ENCODE measurements at regions of chr1 and their contacts with region 1.

Region 1: DNA sequence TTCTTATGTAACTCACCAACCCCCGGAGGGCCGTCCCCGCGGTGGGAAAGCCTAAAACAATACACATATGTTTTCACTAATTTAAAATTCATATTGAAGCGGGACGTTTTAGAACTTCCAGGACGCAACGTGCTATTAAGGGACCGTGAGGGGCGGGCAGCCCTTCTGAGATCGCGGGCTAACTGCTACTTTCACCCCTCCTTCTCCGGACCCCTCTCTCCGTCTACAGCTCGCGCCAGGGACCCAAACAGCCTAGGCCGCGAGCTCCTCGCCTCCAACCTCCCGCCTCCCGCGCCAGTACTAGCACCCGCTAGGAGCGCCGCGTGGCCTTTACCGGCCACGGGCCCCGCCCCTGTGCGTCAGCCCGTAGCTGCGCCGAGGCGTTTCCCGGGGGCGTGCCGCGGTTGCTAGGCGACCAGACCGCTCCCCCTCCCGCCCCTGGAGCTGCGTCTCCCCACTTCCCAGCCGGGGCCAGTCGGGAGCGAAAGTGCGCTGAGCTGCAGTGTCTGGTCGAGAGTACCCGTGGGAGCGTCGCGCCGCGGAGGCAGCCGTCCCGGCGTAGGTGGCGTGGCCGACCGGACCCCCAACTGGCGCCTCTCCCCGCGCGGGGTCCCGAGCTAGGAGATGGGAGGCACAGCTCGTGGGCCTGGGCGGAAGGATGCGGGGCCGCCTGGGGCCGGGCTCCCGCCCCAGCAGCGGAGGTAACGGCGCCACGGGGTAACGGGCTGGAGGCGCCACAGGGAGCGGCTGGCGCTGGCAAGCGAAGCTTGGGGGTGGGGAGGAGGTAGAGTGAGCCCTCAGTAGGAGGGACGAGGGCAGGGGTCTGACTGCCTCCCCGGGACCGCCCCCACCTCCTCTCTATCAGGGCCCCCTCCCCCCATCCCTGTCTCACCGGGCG is at the start of gene DYRK3:
- DNase-seq: peak; percentile 86
- ATAC-seq: peak; percentile 91
- H3K4me3 Mint-ChIP-seq: peak within 1 kb of the TSS; percentile 89
- H3K27ac Mint-ChIP-seq: peak within 1 kb of the TSS; percentile 76
- H3K4me1 Mint-ChIP-seq: peaks cover 24% of the 10 kb centered on the region
- H3K27me3 Mint-ChIP-seq: peaks cover 2% of the 10 kb centered on the region
- CTCF ChIP-seq: no peak
- total RNA-seq, gene DYRK3: 0.33 and 0.37 TPM in 2 replicates

Region 2: GRCh38 chr1:206075786-206076755 is 559.3 kb before region 1 on chr1:
- CTCF ChIA-PET with region 1: no interaction called
- POLR2A ChIA-PET with region 1: no interaction called
- intact Hi-C with region 1: no loop called
- DNase-seq: no peak
- ATAC-seq: no peak
- H3K4me3 Mint-ChIP-seq: no peak overlapping the region
- H3K27ac Mint-ChIP-seq: peak overlapping the region; percentile 41
- H3K4me1 Mint-ChIP-seq: peaks cover 27% of the 10 kb centered on the region
- H3K27me3 Mint-ChIP-seq: no peaks in the 10 kb centered on the region
- CTCF ChIP-seq: no peak

Region 3: GRCh38 chr1:206489980-206490770 is 145.2 kb before region 1 on chr1:
- CTCF ChIA-PET with region 1: no interaction called
- POLR2A ChIA-PET with region 1: no interaction called
- intact Hi-C with region 1: loop called (anchors 1 kb)
- DNase-seq: peak; percentile 66
- ATAC-seq: peak; percentile 95
- H3K4me3 Mint-ChIP-seq: no peak overlapping the region
- H3K27ac Mint-ChIP-seq: no peak overlapping the region
- H3K4me1 Mint-ChIP-seq: peaks cover 10% of the 10 kb centered on the region
- H3K27me3 Mint-ChIP-seq: no peaks in the 10 kb centered on the region
- CTCF ChIP-seq: no peak

Region 4: DNA sequence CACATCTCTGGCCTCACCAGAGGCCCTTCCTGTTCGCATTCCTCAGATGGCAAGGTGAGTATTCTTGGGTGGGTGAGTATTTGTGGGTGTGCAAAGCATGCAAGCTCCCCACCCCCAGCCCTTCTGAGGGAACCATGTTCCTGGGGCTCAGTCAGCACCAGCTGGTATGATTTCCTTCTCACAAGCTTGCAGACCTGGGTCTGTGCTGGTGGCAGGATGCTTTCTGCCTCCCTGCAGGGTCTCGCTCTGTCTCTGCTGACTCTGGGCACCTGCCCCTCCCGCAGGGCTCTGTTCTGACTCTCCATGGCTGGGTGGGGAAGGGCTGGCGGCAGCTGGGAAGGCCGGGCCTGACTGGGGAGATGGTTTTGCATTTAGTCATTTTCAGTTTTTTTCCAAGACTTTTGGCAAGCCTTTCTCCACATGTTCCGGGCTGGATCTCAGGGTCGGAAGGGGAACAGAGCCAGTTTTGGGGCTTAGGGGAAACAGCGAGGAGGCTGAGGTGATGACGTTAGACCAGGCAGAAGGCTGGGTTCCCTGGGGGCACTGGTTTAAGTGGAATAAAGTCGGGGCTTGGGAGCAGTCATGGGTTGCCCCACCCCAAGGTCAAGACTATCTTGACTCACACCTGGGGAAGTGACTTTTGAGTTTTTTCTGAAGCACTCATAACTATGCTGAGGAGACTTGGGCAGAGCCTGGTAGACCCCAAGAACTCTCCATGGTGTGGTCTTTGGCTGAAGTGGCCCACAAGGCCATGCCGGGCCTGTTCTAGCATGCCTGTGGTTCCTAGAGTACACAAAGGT is 121.8 kb before region 1 on chr1:
- CTCF ChIA-PET with region 1: no interaction called
- POLR2A ChIA-PET with region 1: no interaction called
- intact Hi-C with region 1: no loop called
- DNase-seq: no peak
- ATAC-seq: no peak
- H3K4me3 Mint-ChIP-seq: no peak overlapping the region
- H3K27ac Mint-ChIP-seq: no peak overlapping the region
- H3K4me1 Mint-ChIP-seq: peaks cover 14% of the 10 kb centered on the region
- H3K27me3 Mint-ChIP-seq: peaks cover 15% of the 10 kb centered on the region
- CTCF ChIP-seq: no peak

Region 5: GRCh38 chr1:206684478-206685333 is 49.4 kb after region 1 on chr1 and contains the start of gene MAPKAPK2:
- CTCF ChIA-PET with region 1: interaction called, 5 read pairs
- POLR2A ChIA-PET with region 1: interaction called, 4 read pairs
- intact Hi-C with region 1: loop called (anchors 2 kb)
- DNase-seq: peak; percentile 72
- ATAC-seq: peak; percentile 65
- H3K4me3 Mint-ChIP-seq: peak within 1 kb of the TSS; percentile 94
- H3K27ac Mint-ChIP-seq: peak within 1 kb of the TSS; percentile 90
- H3K4me1 Mint-ChIP-seq: peaks cover 80% of the 10 kb centered on the region
- H3K27me3 Mint-ChIP-seq: no peaks in the 10 kb centered on the region
- CTCF ChIP-seq: no peak
- total RNA-seq, gene MAPKAPK2: 71.2 and 72.1 TPM in 2 replicates

Region 6: DNA sequence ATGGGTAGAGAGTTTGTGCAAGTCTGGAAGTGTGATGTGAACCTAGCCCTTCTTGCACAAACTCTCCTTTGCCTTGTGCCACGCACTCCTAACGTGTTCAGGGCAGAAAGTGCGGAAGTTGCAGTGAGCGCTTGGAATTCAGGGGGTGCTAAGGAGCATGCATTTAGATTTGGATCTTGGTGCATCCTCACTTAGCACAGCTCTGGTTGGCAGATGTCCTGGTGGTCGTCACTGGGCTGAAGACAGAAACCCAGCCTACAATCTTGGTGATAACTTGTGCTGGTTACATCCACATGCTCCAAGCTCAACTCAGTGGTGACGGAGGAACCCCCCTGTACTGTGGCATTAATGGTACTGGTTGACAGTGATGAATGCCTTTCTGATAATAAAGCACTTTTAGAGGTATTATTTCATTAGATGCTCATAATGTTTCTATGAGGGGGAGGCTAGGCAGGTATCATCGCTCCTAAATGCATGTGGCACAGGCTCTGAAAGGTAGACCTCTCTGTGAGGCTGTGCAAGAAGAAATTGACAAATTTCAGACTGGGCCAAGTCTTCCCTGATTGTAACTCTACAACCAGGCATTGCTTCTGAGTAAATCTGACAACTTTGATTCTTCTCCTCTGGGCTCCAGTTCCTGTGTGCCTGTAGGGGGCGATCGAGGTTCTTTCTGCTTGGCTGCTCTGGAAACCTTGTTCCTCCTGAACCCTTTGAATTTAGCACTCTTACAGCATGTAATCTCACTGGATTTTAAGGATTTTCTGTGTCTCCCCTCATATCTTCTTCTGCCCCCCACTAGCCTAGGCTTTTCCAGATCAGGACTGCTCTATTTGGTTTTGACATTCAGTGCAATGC is 90.0 kb after region 1 on chr1:
- CTCF ChIA-PET with region 1: interaction called, 4 read pairs
- POLR2A ChIA-PET with region 1: no interaction called
- intact Hi-C with region 1: loop called (anchors 1 kb)
- DNase-seq: no peak
- ATAC-seq: peak; percentile 63
- H3K4me3 Mint-ChIP-seq: no peak overlapping the region
- H3K27ac Mint-ChIP-seq: peak overlapping the region; percentile 63
- H3K4me1 Mint-ChIP-seq: peaks cover 48% of the 10 kb centered on the region
- H3K27me3 Mint-ChIP-seq: no peaks in the 10 kb centered on the region
- CTCF ChIP-seq: no peak

Region 7: GRCh38 chr1:206856674-206857464 is 221.5 kb after region 1 on chr1:
- CTCF ChIA-PET with region 1: no interaction called
- POLR2A ChIA-PET with region 1: no interaction called
- intact Hi-C with region 1: loop called (anchors 5 kb)
- DNase-seq: no peak
- ATAC-seq: peak; percentile 78
- H3K4me3 Mint-ChIP-seq: no peak overlapping the region
- H3K27ac Mint-ChIP-seq: no peak overlapping the region
- H3K4me1 Mint-ChIP-seq: peaks cover 6% of the 10 kb centered on the region
- H3K27me3 Mint-ChIP-seq: peaks cover 12% of the 10 kb centered on the region
- CTCF ChIP-seq: no peak

Region 8: DNA sequence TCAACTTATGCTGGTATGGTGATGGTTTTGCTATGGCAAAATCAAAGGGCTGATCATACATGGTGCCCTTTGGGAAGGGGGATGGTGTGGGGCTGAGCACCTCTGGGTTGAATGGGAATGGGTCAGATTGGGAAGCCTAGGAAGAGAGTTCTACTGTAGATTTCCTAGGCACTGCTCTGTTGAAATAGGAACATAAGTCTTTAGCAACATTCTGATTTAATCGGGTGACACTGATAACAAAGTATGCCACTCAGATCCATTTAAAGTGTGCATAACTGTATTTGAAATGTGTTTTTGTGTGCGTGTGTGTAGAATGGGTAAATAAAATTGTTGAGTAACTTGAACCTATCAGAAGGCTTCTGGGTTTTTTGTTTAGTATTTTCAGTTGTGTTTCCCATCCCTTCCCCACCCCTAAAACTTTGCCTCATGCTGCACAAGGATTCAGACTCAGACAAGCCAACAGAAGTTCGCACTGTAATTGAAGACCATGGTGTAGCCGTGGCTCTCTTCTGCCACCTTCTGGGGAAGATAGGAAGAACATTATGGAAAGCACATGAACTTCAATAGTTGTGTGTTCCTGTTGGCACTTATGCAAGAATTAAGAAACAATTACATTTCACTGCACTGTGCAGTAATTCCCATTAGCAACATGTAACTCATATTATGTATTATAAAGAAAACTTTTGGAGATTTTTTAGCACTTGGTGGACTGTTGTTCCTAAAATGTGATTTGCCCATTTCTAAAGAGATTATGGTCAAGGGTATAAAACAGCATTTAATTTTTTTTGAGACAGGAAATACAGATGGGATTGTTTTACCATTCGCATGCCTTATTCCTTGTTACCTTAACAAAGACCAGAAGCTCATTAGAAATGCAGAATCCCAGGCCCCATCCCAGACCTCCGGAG is 442.4 kb after region 1 on chr1:
- CTCF ChIA-PET with region 1: no interaction called
- POLR2A ChIA-PET with region 1: no interaction called
- intact Hi-C with region 1: loop called (anchors 1 kb)
- DNase-seq: no peak
- ATAC-seq: peak; percentile 95
- H3K4me3 Mint-ChIP-seq: no peak overlapping the region
- H3K27ac Mint-ChIP-seq: no peak overlapping the region
- H3K4me1 Mint-ChIP-seq: no peaks in the 10 kb centered on the region
- H3K27me3 Mint-ChIP-seq: no peaks in the 10 kb centered on the region
- CTCF ChIP-seq: no peak

Region 9: GRCh38 chr1:207282058-207282457 is 646.7 kb after region 1 on chr1:
- CTCF ChIA-PET with region 1: no interaction called
- POLR2A ChIA-PET with region 1: no interaction called
- intact Hi-C with region 1: no loop called
- DNase-seq: no peak
- ATAC-seq: no peak
- H3K4me3 Mint-ChIP-seq: peak overlapping the region; percentile 1
- H3K27ac Mint-ChIP-seq: peak overlapping the region; percentile 0
- H3K4me1 Mint-ChIP-seq: peaks cover 39% of the 10 kb centered on the region
- H3K27me3 Mint-ChIP-seq: no peaks in the 10 kb centered on the region
- CTCF ChIP-seq: no peak

Measured in activated B cell treated with CpG ODN at 0.5 μM for 24 hours (primary cell).